ENCODE measurements at regions of chr5 and their contacts with region 1.

Region 1: GRCh38 chr5:141691867-141692532 is 10.0 kb upstream of the ARAP3 start:
- DNase-seq: peak; percentile 92
- H3K4me3 ChIP-seq: peak overlapping the region; percentile 40 to 54
- H3K27ac ChIP-seq: no peak overlapping the region
- H3K4me1 ChIP-seq: peaks cover 0 to 23% of the 10 kb centered on the region in 2 experiments; a peak in 2 of 4 replicates
- H3K27me3 ChIP-seq: peaks cover 28% of the 10 kb centered on the region
- CTCF ChIP-seq: peak; percentile 91
- EP300 ChIP-seq: no peak
- RAD21 ChIP-seq: peak; percentile 96

Region 2: DNA sequence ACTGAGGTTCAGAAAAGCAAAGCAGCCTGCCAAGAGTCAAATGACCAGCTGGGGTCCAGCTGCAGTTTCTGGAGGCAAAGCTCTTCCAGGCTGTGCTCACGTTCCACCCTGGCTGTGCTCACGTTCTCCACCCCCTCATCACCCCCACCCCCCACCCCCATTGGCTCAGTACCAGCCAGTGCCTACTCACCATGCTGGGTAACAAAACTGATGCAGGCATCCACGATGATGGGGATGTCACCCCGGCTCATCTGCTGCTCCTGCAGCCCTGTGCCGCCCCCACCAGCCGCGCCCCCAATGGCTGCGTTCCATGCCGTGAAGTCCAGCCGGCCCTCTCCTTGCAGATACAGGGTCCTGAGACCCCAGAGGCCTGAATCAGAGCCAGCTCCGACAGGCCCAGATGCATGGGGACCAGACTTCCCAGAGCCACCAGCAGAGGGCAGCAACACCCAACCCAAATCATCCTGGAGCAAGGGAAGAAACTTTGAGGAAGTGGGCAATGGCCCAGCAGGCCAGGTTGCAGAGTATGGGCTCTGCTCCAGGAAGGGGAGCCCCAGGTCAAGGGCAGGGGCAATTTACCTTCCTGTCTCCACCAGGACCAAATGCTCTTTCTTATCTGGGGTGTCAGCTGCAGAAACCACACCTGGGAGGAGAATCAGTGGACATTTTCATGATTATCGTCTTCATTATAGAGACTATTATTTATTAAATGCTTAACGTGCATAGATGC is 27.1 kb before region 1 on chr5:
- CTCF ChIA-PET with region 1: interaction called, 26 read pairs
- POLR2A ChIA-PET with region 1: no interaction called
- DNase-seq: peak; percentile 90
- H3K4me3 ChIP-seq: no peak overlapping the region; a peak in 1 of 4 replicates
- H3K27ac ChIP-seq: no peak overlapping the region
- H3K4me1 ChIP-seq: no peaks in the 10 kb centered on the region; a peak in 1 of 4 replicates
- H3K27me3 ChIP-seq: no peaks in the 10 kb centered on the region
- CTCF ChIP-seq: peak; percentile 89
- EP300 ChIP-seq: no peak
- RAD21 ChIP-seq: peak; percentile 83

Region 3: GRCh38 chr5:141681695-141682641 is 10.0 kb before region 1 on chr5 and contains the start of gene ARAP3:
- CTCF ChIA-PET with region 1: interaction called, 50 read pairs
- POLR2A ChIA-PET with region 1: interaction called, 3 read pairs
- DNase-seq: peak; percentile 91
- H3K4me3 ChIP-seq: peak within 1 kb of the TSS; percentile 52 to 55
- H3K27ac ChIP-seq: peak within 1 kb of the TSS; percentile 72 to 96
- H3K4me1 ChIP-seq: peaks cover 19 to 40% of the 10 kb centered on the region in 2 experiments; a peak in 3 of 4 replicates
- H3K27me3 ChIP-seq: no peaks in the 10 kb centered on the region
- CTCF ChIP-seq: no peak
- EP300 ChIP-seq: peak in 1 of 2 experiments; percentile 47; a peak in 1 of 4 replicates
- RAD21 ChIP-seq: no peak
- polyA plus RNA-seq, gene ARAP3: 5.5 and 6.5 TPM in 2 replicates

Region 4: GRCh38 chr5:141811287-141812155 is 119.5 kb after region 1 on chr5:
- CTCF ChIA-PET with region 1: interaction called, 447 read pairs
- POLR2A ChIA-PET with region 1: no interaction called
- DNase-seq: peak; percentile 86
- H3K4me3 ChIP-seq: peak overlapping the region in 1 of 2 experiments; percentile 24; a peak in 2 of 4 replicates
- H3K27ac ChIP-seq: no peak overlapping the region
- H3K4me1 ChIP-seq: peaks cover 0 to 16% of the 10 kb centered on the region in 2 experiments; a peak in 1 of 4 replicates
- H3K27me3 ChIP-seq: peaks cover 19% of the 10 kb centered on the region
- CTCF ChIP-seq: peak; percentile 75
- EP300 ChIP-seq: no peak
- RAD21 ChIP-seq: peak; percentile 52; the same call in 1 of the 2 replicates

Region 5: GRCh38 chr5:141914199-141914743 is 222.3 kb after region 1 on chr5:
- CTCF ChIA-PET with region 1: interaction called, 50 read pairs
- POLR2A ChIA-PET with region 1: no interaction called
- DNase-seq: peak; percentile 94
- H3K4me3 ChIP-seq: peak overlapping the region in 1 of 2 experiments; percentile 4; a peak in 1 of 4 replicates
- H3K27ac ChIP-seq: no peak overlapping the region
- H3K4me1 ChIP-seq: peaks cover 0 to 4% of the 10 kb centered on the region in 2 experiments; a peak in 1 of 4 replicates
- H3K27me3 ChIP-seq: no peaks in the 10 kb centered on the region; the same call in 1 of the 2 replicates
- CTCF ChIP-seq: no peak
- EP300 ChIP-seq: no peak
- RAD21 ChIP-seq: peak; percentile 75

Region 6: GRCh38 chr5:141934099-141934844 is 242.3 kb after region 1 on chr5:
- CTCF ChIA-PET with region 1: interaction called, 33 read pairs
- POLR2A ChIA-PET with region 1: no interaction called
- DNase-seq: peak; percentile 84
- H3K4me3 ChIP-seq: no peak overlapping the region
- H3K27ac ChIP-seq: peak overlapping the region in 1 of 2 experiments; percentile 58; a peak in 2 of 4 replicates
- H3K4me1 ChIP-seq: peaks cover 0 to 18% of the 10 kb centered on the region in 2 experiments; a peak in 2 of 4 replicates
- H3K27me3 ChIP-seq: no peaks in the 10 kb centered on the region
- CTCF ChIP-seq: no peak
- EP300 ChIP-seq: no peak
- RAD21 ChIP-seq: peak; percentile 39

Region 7: DNA sequence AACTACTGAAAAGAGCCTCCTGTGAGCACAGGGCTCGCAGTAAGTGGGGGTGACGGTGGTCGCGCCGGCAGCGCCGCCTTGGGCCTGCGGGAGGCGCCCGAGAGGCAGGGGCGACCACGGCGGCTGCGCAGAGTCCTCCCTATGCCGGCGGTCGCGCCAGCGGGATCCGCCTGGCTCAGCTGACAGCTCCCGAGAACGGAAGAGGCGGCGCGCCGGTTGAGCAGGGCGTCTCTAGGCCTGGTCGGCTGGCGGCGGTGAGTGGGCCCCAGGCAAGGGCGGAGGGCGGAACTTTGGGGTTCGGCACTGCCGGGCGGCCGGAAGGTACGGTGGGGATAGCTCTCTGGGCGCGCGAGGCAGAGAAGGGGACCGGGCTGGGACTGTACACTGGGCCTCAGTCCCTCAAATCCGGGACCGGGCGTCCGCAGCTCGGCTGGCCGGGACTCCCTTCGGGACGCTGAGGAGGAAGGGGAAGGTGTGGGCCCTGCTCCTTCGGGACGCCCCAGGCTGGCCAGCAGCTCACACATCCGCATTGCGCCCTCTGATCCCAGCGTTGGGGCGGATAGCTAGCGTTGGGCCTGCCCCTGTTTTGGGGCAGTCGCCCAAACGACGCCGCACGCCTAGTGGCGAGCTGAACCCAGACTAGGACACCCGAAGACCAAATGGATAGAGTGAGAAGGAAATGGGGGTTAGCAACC is 277.1 kb after region 1 on chr5 and contains the start of gene RNF14:
- CTCF ChIA-PET with region 1: interaction called, 325 read pairs
- POLR2A ChIA-PET with region 1: no interaction called
- DNase-seq: peak; percentile 97
- H3K4me3 ChIP-seq: peak within 1 kb of the TSS; percentile 81 to 85
- H3K27ac ChIP-seq: peak within 1 kb of the TSS; percentile 84 to 90
- H3K4me1 ChIP-seq: peaks cover 7 to 13% of the 10 kb centered on the region in 2 experiments; a peak in 3 of 4 replicates
- H3K27me3 ChIP-seq: no peaks in the 10 kb centered on the region
- CTCF ChIP-seq: peak; percentile 79
- EP300 ChIP-seq: no peak
- RAD21 ChIP-seq: no peak
- polyA plus RNA-seq, gene RNF14: 24.5 and 26.3 TPM in 2 replicates

Measured in SK-N-SH (cell line).